Activated B cell treated with CpG ODN at 0.5 μM for 24 hours (primary cell): ENCODE measurements at regions of chr6 and their contacts with region 1.

Region 1: GRCh38 chr6:146857180-146857979 is 258.6 kb downstream of the ADGB start:
- DNase-seq: peak; percentile 61
- ATAC-seq: peak; percentile 91
- H3K4me3 Mint-ChIP-seq: peak overlapping the region; percentile 48
- H3K27ac Mint-ChIP-seq: peak overlapping the region; percentile 9
- H3K4me1 Mint-ChIP-seq: peaks cover 8% of the 10 kb centered on the region
- H3K27me3 Mint-ChIP-seq: peaks cover under 1% of the 10 kb centered on the region
- CTCF ChIP-seq: peak; percentile 74

Region 2: GRCh38 chr6:147222160-147222838 is 364.9 kb after region 1 on chr6:
- CTCF ChIA-PET with region 1: no interaction called
- POLR2A ChIA-PET with region 1: no interaction called
- intact Hi-C with region 1: loop called (anchors 1 kb)
- DNase-seq: no peak
- ATAC-seq: no peak
- H3K4me3 Mint-ChIP-seq: no peak overlapping the region
- H3K27ac Mint-ChIP-seq: no peak overlapping the region
- H3K4me1 Mint-ChIP-seq: peaks cover 14% of the 10 kb centered on the region
- H3K27me3 Mint-ChIP-seq: no peaks in the 10 kb centered on the region
- CTCF ChIP-seq: no peak

Region 3: DNA sequence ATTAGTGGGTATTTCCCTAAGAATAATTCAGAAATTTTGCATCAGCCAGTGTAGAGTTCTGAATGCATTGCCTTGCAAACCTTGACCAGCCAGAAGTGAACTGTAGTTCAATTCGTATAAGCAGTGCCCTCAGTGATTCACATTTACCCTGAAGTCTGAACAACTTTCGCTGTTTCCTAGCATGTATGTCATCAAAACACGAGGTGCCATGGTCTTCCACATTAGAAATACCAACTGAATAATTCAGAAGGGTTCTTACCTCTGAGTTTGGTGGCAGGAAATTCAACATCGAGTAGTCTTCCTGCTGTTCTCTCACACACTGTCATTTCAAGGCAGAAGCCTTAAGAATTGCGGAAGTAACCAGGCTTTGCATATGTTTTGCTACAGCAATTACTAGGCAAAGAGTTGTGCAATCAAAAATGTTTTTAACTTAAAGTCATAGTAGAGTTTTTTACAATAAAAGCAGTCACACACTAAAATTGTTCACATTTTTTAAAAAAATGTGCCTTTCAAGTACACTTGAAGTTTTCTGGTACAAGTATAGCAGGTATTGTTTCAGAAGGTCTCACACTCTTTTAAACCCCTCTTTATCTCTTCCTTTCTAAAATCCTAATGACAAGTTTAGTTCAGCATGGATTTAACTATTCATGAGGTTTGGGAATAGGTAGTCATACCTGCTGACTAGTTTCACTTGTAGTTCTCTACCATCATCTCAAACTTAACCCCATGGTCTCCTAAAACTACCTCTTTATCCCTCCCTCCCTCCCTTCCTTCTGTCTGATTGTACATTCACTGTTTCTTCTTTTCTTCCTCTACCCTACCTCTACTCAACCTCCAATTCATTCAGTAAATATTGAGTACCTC is 465.2 kb after region 1 on chr6:
- CTCF ChIA-PET with region 1: no interaction called
- POLR2A ChIA-PET with region 1: no interaction called
- intact Hi-C with region 1: loop called (anchors 1 kb)
- DNase-seq: no peak
- ATAC-seq: peak; percentile 93
- H3K4me3 Mint-ChIP-seq: peak overlapping the region; percentile 79
- H3K27ac Mint-ChIP-seq: peak overlapping the region; percentile 93
- H3K4me1 Mint-ChIP-seq: peaks cover 27% of the 10 kb centered on the region
- H3K27me3 Mint-ChIP-seq: no peaks in the 10 kb centered on the region
- CTCF ChIP-seq: no peak

Region 4: GRCh38 chr6:148166339-148166968 is 1309.1 kb after region 1 on chr6:
- CTCF ChIA-PET with region 1: no interaction called
- POLR2A ChIA-PET with region 1: no interaction called
- intact Hi-C with region 1: loop called (anchors 1 kb)
- DNase-seq: no peak
- ATAC-seq: no peak
- H3K4me3 Mint-ChIP-seq: no peak overlapping the region
- H3K27ac Mint-ChIP-seq: no peak overlapping the region
- H3K4me1 Mint-ChIP-seq: no peaks in the 10 kb centered on the region
- H3K27me3 Mint-ChIP-seq: peaks cover 11% of the 10 kb centered on the region
- CTCF ChIP-seq: no peak

Region 5: DNA sequence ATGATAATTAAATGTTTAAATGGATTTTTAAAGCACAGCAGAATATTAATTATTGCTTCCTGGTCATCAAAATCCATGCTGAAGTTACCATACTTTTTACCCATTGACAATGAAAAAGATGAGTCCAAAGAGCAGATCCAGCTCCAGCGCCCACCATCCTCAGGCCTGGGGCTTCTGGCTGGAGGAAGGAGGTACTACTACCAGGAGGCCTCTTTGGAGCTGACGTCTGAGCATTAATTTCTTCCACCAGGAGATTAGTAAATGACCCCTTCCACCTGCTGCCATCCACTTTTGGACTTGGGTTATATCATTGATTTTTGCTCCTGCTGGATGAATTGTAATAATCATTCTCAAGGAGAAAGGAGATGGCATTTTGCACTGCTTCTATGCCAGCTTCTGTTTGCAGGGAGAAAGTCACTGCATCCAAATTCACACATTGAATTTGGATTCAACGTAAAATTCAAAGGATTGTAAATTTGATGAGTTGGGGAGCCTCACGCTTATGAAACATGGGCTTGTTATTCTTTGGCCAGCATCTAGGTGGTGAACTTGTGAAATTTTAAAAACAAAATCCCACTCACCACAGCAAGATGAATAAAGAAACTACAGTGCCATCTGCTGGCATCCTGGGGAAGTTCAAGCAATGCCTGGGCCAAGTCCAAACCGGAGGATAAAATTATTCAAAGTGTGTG is 1607.1 kb after region 1 on chr6:
- CTCF ChIA-PET with region 1: no interaction called
- POLR2A ChIA-PET with region 1: no interaction called
- intact Hi-C with region 1: loop called (anchors 1 kb)
- DNase-seq: peak; percentile 36
- ATAC-seq: peak; percentile 74
- H3K4me3 Mint-ChIP-seq: no peak overlapping the region
- H3K27ac Mint-ChIP-seq: no peak overlapping the region
- H3K4me1 Mint-ChIP-seq: peaks cover 4% of the 10 kb centered on the region
- H3K27me3 Mint-ChIP-seq: peaks cover 13% of the 10 kb centered on the region
- CTCF ChIP-seq: peak; percentile 87